Endothelial cell of umbilical vein (primary cell): ENCODE measurements at regions of chr2 and their contacts with region 1.

Region 1: GRCh38 chr2:43484323-43484930 is 111.4 kb downstream of the THADA start:
- DNase-seq: peak; percentile 84
- H3K4me3 ChIP-seq: no peak overlapping the region
- H3K27ac ChIP-seq: no peak overlapping the region
- H3K4me1 ChIP-seq: peaks cover 7% of the 10 kb centered on the region
- H3K27me3 ChIP-seq: no peaks in the 10 kb centered on the region
- CTCF ChIP-seq: peak; percentile 31 to 32
- POLR2A ChIP-seq: no peak

Region 2: DNA sequence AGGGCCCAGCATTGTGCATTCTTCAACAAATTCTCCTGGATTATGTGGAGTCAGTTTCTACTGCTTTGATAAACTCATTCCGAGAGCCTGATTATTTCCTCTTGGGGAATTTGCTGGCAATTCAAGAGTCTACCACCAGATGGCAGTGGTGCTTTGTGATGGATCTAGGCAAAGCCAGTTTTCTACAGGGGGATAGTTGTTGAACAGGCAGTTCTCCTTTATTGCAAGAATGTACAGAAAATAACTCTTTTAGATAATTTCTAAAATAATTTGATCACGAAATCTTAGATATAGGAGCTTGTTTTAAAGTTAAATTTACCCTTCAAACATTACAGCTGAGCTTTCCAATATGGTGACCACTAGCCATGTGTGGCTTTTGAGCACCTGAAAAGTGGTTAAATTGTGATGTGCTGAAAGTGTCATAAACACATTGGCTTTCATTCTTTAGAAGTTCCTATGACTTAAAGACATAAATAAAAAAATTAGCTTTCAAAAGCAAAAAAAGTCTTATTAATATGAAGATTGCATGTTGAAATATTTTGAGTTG is 625.3 kb before region 1 on chr2:
- CTCF ChIA-PET with region 1: interaction called, 3 read pairs
- POLR2A ChIA-PET with region 1: no interaction called
- dilution Hi-C with region 1: no loop called
- intact Hi-C with region 1: loop called (anchors 1 kb)
- DNase-seq: peak; percentile 90
- H3K4me3 ChIP-seq: no peak overlapping the region
- H3K27ac ChIP-seq: no peak overlapping the region
- H3K4me1 ChIP-seq: peaks cover 19% of the 10 kb centered on the region
- H3K27me3 ChIP-seq: no peaks in the 10 kb centered on the region
- CTCF ChIP-seq: peak; percentile 75 to 78
- POLR2A ChIP-seq: no peak

Region 3: GRCh38 chr2:42954227-42954962 is 530.0 kb before region 1 on chr2:
- CTCF ChIA-PET with region 1: interaction called, 7 read pairs
- POLR2A ChIA-PET with region 1: no interaction called
- dilution Hi-C with region 1: no loop called
- intact Hi-C with region 1: loop called (anchors 1 kb)
- DNase-seq: no peak
- H3K4me3 ChIP-seq: no peak overlapping the region
- H3K27ac ChIP-seq: peak overlapping the region; percentile 65
- H3K4me1 ChIP-seq: peaks cover 30% of the 10 kb centered on the region
- H3K27me3 ChIP-seq: no peaks in the 10 kb centered on the region
- CTCF ChIP-seq: no peak
- POLR2A ChIP-seq: no peak

Region 4: GRCh38 chr2:43333656-43334144 is 150.7 kb before region 1 on chr2:
- CTCF ChIA-PET with region 1: interaction called, 11 read pairs
- POLR2A ChIA-PET with region 1: no interaction called
- dilution Hi-C with region 1: no loop called
- intact Hi-C with region 1: no loop called
- DNase-seq: peak; percentile 36
- H3K4me3 ChIP-seq: no peak overlapping the region
- H3K27ac ChIP-seq: peak overlapping the region; percentile 19
- H3K4me1 ChIP-seq: peaks cover 24% of the 10 kb centered on the region
- H3K27me3 ChIP-seq: no peaks in the 10 kb centered on the region
- CTCF ChIP-seq: no peak
- POLR2A ChIP-seq: no peak

Region 5: GRCh38 chr2:43417300-43417699 is 67.1 kb before region 1 on chr2:
- CTCF ChIA-PET with region 1: no interaction called
- POLR2A ChIA-PET with region 1: no interaction called
- dilution Hi-C with region 1: no loop called
- intact Hi-C with region 1: no loop called
- DNase-seq: no peak
- H3K4me3 ChIP-seq: no peak overlapping the region
- H3K27ac ChIP-seq: no peak overlapping the region
- H3K4me1 ChIP-seq: peaks cover 15% of the 10 kb centered on the region
- H3K27me3 ChIP-seq: no peaks in the 10 kb centered on the region
- CTCF ChIP-seq: no peak
- POLR2A ChIP-seq: no peak

Region 6: GRCh38 chr2:43467891-43468290 is 16.5 kb before region 1 on chr2:
- CTCF ChIA-PET with region 1: interaction called, 15 read pairs
- POLR2A ChIA-PET with region 1: no interaction called
- dilution Hi-C with region 1: no loop called
- intact Hi-C with region 1: no loop called
- DNase-seq: peak; percentile 78
- H3K4me3 ChIP-seq: no peak overlapping the region
- H3K27ac ChIP-seq: peak overlapping the region; percentile 83
- H3K4me1 ChIP-seq: peaks cover 26% of the 10 kb centered on the region
- H3K27me3 ChIP-seq: no peaks in the 10 kb centered on the region
- CTCF ChIP-seq: no peak
- POLR2A ChIP-seq: no peak